Ascending aorta (tissue), 2 donors: ENCODE measurements at regions of chr1 and their contacts with region 1.

Region 1: DNA sequence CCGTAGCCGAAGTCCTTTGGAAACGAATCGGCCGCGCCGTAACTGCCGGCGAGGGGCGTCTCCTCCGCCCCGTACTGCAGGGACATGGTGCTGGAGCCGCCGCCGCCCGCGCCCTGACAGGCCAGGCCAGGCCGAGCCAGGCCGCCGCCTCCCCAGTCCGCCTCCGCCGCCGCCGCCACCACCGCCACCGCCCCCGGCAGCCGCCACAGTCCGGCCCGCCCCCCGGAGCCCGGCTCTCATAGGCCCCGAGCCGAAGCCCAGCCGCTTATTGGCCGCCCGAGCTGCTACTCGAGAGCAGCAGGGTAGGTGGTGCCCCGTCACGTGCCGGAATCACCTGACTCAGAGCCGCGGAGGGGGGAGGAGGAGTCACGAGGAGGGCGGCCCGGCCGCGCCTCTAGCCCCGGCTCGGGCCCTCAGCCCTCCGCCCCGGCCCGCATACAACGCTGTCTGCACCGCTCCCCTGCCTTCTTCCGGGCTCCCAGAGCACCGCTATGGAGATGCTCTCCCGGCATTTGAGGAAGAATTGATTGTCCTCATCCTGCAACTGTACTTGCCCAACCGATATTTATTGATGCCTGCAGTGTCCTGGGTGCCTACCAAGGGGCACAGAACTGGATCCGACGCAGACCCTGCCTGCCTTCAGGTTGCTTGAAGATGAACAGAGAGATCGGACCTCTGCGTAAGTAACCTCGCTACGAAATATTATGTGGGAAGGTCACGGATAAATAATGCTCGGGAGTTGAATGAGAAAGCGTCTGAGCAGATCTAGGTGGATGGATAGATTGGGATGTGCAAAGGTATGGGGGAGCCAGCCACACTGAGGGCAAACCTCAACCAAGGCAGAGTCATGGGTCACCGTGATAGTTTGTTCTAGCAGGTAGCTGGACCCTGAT is at the start of gene RRAGC:
- DNase-seq: peak; percentile 100
- H3K4me3 ChIP-seq: peak within 1 kb of the TSS; percentile 91 to 97
- H3K27ac ChIP-seq: peak within 1 kb of the TSS; percentile 80 to 93
- H3K4me1 ChIP-seq: peaks cover 6 to 28% of the 10 kb centered on the region in 2 donors
- H3K27me3 ChIP-seq: no peaks in the 10 kb centered on the region
- CTCF ChIP-seq: no peak
- total RNA-seq, gene RRAGC: 6.2 TPM

Region 2: GRCh38 chr1:38873027-38873969 is 13.5 kb after region 1 on chr1 and contains the start of gene MYCBP:
- intact Hi-C with region 1: loop called (anchors 1 kb)
- DNase-seq: peak; percentile 81 to 97
- H3K4me3 ChIP-seq: peak within 1 kb of the TSS; percentile 76 to 96
- H3K27ac ChIP-seq: peak within 1 kb of the TSS; percentile 45 to 74
- H3K4me1 ChIP-seq: peaks cover 8 to 12% of the 10 kb centered on the region in 2 donors
- H3K27me3 ChIP-seq: no peaks in the 10 kb centered on the region
- CTCF ChIP-seq: no peak
- total RNA-seq, gene MYCBP: 0.64 TPM

Region 3: GRCh38 chr1:38990738-38991639 is 131.2 kb after region 1 on chr1 and contains the start of gene AKIRIN1:
- intact Hi-C with region 1: loop called (anchors 1 kb)
- DNase-seq: peak; percentile 88 to 99
- H3K4me3 ChIP-seq: peak within 1 kb of the TSS; percentile 82
- H3K27ac ChIP-seq: peak within 1 kb of the TSS; percentile 88 to 89
- H3K4me1 ChIP-seq: peaks cover 0 to 3% of the 10 kb centered on the region in 2 donors
- H3K27me3 ChIP-seq: no peaks in the 10 kb centered on the region
- CTCF ChIP-seq: peak in 2 of 3 experiments; percentile 31 to 48
- total RNA-seq, gene AKIRIN1: 29.6 TPM

Region 4: GRCh38 chr1:39026051-39026865 is 166.5 kb after region 1 on chr1 and contains the start of gene NDUFS5:
- intact Hi-C with region 1: loop called (anchors 10 kb)
- DNase-seq: peak; percentile 39 to 95
- H3K4me3 ChIP-seq: peak within 1 kb of the TSS; percentile 64 to 71
- H3K27ac ChIP-seq: peak within 1 kb of the TSS; percentile 92 to 96
- H3K4me1 ChIP-seq: peaks cover 0 to 10% of the 10 kb centered on the region in 2 donors
- H3K27me3 ChIP-seq: no peaks in the 10 kb centered on the region
- CTCF ChIP-seq: no peak
- total RNA-seq, gene NDUFS5: 194 TPM

Region 5: GRCh38 chr1:39310015-39310414 is 450.2 kb after region 1 on chr1:
- intact Hi-C with region 1: no loop called
- DNase-seq: no peak
- H3K4me3 ChIP-seq: no peak overlapping the region
- H3K27ac ChIP-seq: no peak overlapping the region
- H3K4me1 ChIP-seq: no peaks in the 10 kb centered on the region
- H3K27me3 ChIP-seq: no peaks in the 10 kb centered on the region
- CTCF ChIP-seq: no peak